Sigmoid colon (tissue), 7 donors: ENCODE measurements at regions of chr7 and their contacts with region 1.

Region 1: DNA sequence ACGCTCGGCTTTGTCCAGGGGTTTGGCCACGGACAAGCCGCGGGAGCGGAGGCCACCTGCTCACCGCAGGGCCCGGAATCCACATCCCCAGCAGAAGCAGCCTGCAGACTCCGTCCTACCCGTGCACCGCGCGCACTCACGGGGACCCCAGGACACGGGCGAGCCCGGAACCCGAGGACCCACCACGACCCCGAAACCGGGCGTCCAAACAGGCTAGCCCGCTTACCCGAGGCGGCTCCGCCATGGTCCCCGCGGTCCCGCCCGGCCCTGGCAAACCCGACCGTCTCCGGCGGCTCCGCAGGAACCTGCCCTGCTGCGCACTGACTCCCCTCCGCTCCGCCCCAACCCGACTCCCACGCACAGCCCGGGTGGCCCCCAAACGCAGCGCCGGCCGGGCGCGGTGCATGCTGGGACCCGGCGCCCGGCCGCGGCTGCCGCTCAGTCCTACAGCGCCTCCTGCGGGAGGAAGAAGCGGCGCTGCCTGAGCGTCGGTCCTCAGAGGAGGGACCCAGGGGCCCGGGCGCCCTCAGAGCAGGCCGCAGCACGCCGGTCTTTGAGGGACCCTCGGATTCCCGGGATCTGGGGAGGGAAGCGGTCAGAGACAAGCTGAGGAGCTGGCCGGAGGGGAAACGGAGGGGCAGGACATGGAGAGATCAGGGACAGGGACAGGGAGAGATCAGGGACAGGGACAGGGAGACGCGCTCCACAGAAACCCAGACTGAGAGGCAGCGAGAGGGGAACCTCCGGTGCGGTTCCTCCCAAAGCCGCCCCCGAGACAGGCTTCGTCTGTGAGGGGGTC is at the start of gene ZNF786:
- DNase-seq: peak; percentile 93
- H3K4me3 ChIP-seq: peak within 1 kb of the TSS; percentile 95 to 99 (median 96)
- H3K27ac ChIP-seq: peak within 1 kb of the TSS; percentile 92 to 99 (median 96)
- H3K4me1 ChIP-seq: peaks cover 0 to 17% (median 9%) of the 10 kb centered on the region in 4 donors
- H3K27me3 ChIP-seq: no peaks in the 10 kb centered on the region
- CTCF ChIP-seq: peak; percentile 84 to 93 (median 91)
- EP300 ChIP-seq: no peak
- POLR2A ChIP-seq: peak; percentile 88 to 91
- total RNA-seq, gene ZNF786: 3.0 to 6.9 (median 3.9) TPM

Region 2: DNA sequence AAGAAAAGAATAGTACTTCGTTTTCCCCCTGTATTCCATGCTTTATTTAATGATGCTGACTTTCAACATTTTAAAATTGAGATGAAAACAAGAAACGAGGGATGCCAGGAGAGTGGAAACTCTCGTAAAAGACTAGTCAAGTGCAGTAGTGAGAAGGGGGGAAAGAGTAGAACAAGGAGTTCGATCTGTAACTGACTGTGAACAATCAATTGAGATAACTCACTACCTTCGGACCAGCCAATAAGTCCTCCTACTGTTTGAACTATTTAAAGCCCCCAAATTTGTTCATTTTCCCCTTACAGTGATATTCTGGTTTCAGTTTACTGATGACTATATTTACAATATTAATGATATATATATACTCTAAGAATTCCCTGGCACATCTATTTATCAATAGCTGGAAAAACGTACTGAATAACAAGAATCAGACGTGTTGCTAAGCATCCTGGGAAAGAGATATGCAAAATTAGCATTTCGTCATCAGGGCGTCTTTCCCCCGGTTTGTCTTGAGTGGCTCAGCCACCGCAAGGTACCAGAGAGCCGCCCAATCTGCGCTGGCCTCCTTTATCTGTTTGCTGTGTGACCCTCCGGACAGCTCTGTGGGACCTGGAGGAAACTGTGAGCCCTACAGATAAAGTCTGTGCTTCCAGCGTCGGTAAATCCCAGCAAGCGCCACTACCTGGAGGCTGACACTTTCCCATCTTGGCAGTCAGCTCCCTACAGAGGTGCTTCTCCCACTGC is 103.4 kb before region 1 on chr7:
- intact Hi-C with region 1: loop called (anchors 1 kb)
- DNase-seq: peak; percentile 94
- H3K4me3 ChIP-seq: peak overlapping the region; percentile 59 to 65 (median 64)
- H3K27ac ChIP-seq: peak overlapping the region; percentile 82 to 89 (median 84)
- H3K4me1 ChIP-seq: peaks cover 0 to 36% (median 28%) of the 10 kb centered on the region in 4 donors
- H3K27me3 ChIP-seq: no peaks in the 10 kb centered on the region
- CTCF ChIP-seq: no peak
- EP300 ChIP-seq: no peak
- POLR2A ChIP-seq: no peak

Region 3: GRCh38 chr7:149005241-149006050 is 85.2 kb before region 1 on chr7:
- intact Hi-C with region 1: loop called (anchors 1 kb)
- DNase-seq: peak; percentile 92
- H3K4me3 ChIP-seq: no peak overlapping the region
- H3K27ac ChIP-seq: no peak overlapping the region
- H3K4me1 ChIP-seq: no peaks in the 10 kb centered on the region
- H3K27me3 ChIP-seq: no peaks in the 10 kb centered on the region
- CTCF ChIP-seq: peak; percentile 79 to 92 (median 89)
- EP300 ChIP-seq: no peak
- POLR2A ChIP-seq: no peak

Region 4: GRCh38 chr7:149028346-149029109 is 62.1 kb before region 1 on chr7 and contains the start of gene PDIA4:
- intact Hi-C with region 1: loop called (anchors 2 kb)
- DNase-seq: peak; percentile 100
- H3K4me3 ChIP-seq: peak within 1 kb of the TSS; percentile 59 to 90 (median 82)
- H3K27ac ChIP-seq: peak within 1 kb of the TSS; percentile 92 to 96 (median 95)
- H3K4me1 ChIP-seq: peaks cover 0 to 28% (median 23%) of the 10 kb centered on the region in 4 donors
- H3K27me3 ChIP-seq: no peaks in the 10 kb centered on the region
- CTCF ChIP-seq: peak in 2 of 4 experiments; percentile 26 to 29
- EP300 ChIP-seq: no peak
- POLR2A ChIP-seq: peak; percentile 42 to 60
- total RNA-seq, gene PDIA4: 34.3 to 47.4 (median 39.7) TPM

Region 5: DNA sequence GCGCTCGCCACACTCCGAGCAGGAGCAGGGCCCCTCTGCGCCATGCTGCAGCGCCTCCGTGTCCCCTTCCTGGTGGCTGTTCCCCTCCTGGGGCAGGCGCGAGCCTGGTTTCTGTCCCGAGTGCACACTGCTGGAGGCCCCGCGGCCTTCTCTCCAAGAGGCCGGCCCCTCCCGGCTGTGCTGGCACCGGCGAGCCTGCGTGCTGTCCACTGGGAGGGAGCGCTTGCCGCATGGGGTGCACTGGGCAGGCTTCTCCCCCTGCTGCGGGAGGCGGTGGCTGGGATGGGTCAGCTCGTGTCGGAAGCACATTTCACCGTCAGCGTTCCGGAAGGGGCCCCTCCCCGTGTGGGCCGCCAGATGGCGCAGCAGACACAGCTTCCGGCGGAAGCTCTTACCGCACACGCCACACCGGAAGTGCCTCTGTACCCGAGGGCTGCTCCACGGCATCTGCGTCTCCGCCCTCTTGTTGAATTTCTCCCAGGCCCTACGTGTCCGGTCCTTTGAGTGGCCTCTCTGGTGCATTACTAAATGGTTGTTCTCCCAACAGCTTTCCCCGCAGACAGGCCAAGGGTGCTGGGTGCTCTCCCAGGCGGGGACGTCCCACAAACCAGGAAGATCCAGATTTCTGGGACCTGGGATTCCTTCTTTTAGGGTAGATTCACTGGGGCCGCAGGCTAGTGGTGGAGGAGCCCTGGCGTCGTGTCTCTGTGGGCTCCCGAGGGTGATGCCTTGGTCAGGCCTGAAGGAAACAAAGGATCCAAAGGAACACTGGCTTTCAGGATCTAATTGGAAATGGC is 18.8 kb before region 1 on chr7:
- intact Hi-C with region 1: loop called (anchors 2 kb)
- DNase-seq: peak; percentile 34
- H3K4me3 ChIP-seq: no peak overlapping the region
- H3K27ac ChIP-seq: peak overlapping the region in 3 of 4 donors; percentile 22 to 42 (median 39)
- H3K4me1 ChIP-seq: no peaks in the 10 kb centered on the region
- H3K27me3 ChIP-seq: no peaks in the 10 kb centered on the region
- CTCF ChIP-seq: no peak
- EP300 ChIP-seq: no peak
- POLR2A ChIP-seq: no peak

Region 6: GRCh38 chr7:149125863-149126661 is 35.5 kb after region 1 on chr7 and contains the start of gene ZNF425:
- intact Hi-C with region 1: loop called (anchors 1 kb)
- DNase-seq: peak; percentile 95
- H3K4me3 ChIP-seq: peak within 1 kb of the TSS; percentile 87 to 99 (median 90)
- H3K27ac ChIP-seq: peak within 1 kb of the TSS; percentile 96 to 99 (median 97)
- H3K4me1 ChIP-seq: peaks cover 0 to 17% (median 13%) of the 10 kb centered on the region in 4 donors
- H3K27me3 ChIP-seq: no peaks in the 10 kb centered on the region
- CTCF ChIP-seq: peak; percentile 90 to 98 (median 96)
- EP300 ChIP-seq: no peak
- POLR2A ChIP-seq: peak; percentile 87 to 90
- total RNA-seq, gene ZNF425: 2.9 to 4.9 (median 3.6) TPM

Region 7: DNA sequence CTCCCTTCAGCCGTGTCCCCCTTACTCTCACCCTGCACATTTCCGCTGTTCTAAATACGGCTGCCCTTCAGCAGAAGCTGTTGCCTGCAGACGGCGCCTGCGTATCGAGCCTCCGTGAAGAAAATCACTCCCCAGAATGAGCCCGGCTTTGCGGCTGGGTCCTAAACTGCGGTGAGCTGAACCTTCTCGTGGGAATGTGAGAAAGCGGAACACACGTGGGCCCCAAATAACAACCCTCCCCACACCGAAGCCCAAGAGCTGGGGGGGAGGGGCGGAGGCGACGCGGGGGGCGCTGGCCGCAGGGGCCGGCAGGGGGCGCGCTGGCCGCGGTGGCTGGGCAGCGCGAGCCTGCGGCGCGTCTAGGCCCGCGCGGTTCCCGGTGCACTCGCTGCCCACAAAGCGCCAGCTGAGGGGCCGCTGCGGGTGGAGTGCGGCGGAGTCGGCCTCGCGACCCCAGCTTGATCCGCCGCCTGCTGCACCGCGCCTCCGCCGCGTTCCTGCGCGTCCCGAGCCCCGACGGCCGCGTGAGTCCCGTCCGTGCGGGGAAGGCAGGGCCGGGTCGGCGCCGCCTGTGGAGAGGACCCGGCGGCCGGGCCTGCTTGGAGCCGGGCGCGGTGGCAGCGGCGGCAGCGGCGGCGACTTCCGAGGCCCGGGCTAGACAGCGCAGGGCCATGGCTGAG is 56.6 kb after region 1 on chr7 and contains the start of gene ZNF398:
- intact Hi-C with region 1: loop called (anchors 2 kb)
- DNase-seq: peak; percentile 77
- H3K4me3 ChIP-seq: peak within 1 kb of the TSS; percentile 72 to 92 (median 84)
- H3K27ac ChIP-seq: peak within 1 kb of the TSS; percentile 89 to 94 (median 92)
- H3K4me1 ChIP-seq: peaks cover 0 to 31% (median 21%) of the 10 kb centered on the region in 4 donors
- H3K27me3 ChIP-seq: no peaks in the 10 kb centered on the region
- CTCF ChIP-seq: peak; percentile 21 to 84 (median 31)
- EP300 ChIP-seq: no peak
- POLR2A ChIP-seq: no peak
- total RNA-seq, gene ZNF398: 13.0 to 19.7 (median 18.4) TPM

Region 8: DNA sequence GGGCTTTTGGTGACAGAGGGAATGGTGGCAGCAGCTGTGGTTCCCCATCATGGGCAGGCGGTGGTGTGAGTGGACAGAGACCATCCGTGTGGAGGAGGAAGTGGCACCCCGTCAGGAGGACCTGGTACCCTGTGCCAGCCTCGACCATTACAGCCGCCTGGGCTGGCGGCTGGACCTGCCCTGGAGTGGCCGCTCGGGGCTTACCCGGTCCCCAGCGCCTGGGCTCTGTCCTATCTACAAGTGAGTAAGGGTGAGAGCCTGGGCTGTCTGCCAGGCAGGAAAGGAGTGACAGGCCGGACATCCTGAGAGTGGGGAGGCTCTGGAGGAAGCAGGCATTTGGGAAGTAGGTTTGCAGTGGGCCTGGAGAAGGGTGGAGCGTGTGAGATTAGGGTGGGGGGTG is 685.7 kb after region 1 on chr7:
- intact Hi-C with region 1: no loop called
- DNase-seq: peak; percentile 84
- H3K4me3 ChIP-seq: no peak overlapping the region
- H3K27ac ChIP-seq: no peak overlapping the region
- H3K4me1 ChIP-seq: peaks cover 0 to 22% (median 8%) of the 10 kb centered on the region in 4 donors
- H3K27me3 ChIP-seq: no peaks in the 10 kb centered on the region
- CTCF ChIP-seq: no peak
- EP300 ChIP-seq: no peak
- POLR2A ChIP-seq: no peak